CD8-positive, alpha-beta memory T cell (primary cell): ENCODE measurements at regions of chr11 and their contacts with region 1.

Region 1: GRCh38 chr11:447923-448731 is 2.0 kb upstream of the PTDSS2 start:
- DNase-seq: peak; percentile 90 to 96 (median 93)
- H3K4me3 ChIP-seq: peak overlapping the region; percentile 76
- H3K4me3 Mint-ChIP-seq: peak overlapping the region; percentile 88 to 97 (median 90)
- H3K27ac ChIP-seq: peak overlapping the region; percentile 79
- H3K27ac Mint-ChIP-seq: peak overlapping the region; percentile 94 to 98 (median 98)
- H3K4me1 ChIP-seq: peaks cover 22% of the 10 kb centered on the region
- H3K4me1 Mint-ChIP-seq: peaks cover 15 to 30% (median 25%) of the 10 kb centered on the region in 3 donors
- H3K27me3 ChIP-seq: no peaks in the 10 kb centered on the region
- H3K27me3 Mint-ChIP-seq: peaks cover 0 to 2% of the 10 kb centered on the region in 2 donors

Region 2: DNA sequence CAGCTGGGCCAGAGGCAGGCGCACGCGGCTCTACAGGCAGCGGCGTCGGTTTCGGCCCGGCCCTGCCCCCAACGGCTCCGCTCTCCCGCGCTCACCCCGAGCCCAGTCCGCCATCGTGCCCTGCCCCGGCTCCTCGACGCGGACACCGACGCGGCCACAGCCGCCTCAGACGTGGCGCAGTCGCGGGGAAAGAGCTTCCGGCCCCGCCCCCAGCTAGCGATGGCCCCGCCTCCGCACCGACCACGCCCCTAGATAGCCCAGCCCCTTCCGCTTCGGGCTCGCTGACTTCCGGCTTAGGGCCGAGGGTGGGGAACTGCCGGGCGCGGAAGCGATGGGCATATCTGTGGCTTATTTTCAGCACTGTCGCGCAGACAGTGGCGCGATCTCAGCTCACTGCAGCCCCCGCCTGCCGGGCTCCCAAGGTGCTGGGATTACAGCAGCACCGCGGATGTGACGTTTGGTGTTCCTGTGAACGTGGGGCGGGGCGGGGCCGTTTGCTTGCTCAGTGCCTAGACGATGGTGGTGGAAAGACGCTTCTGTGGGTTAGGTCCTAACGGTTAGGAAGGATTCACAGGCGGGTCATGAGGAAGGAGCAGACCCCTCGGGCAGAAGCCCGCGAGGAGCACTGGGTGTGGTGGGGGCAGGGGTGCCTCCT is 240.8 kb before region 1 on chr11 and contains the starts of genes BET1L and RIC8A:
- CTCF ChIA-PET with region 1: interaction called, 10 read pairs
- POLR2A ChIA-PET with region 1: interaction called, 26 read pairs
- DNase-seq: peak; percentile 96 to 99 (median 97)
- H3K4me3 ChIP-seq: peak within 1 kb of the TSS; percentile 83
- H3K4me3 Mint-ChIP-seq: peak within 1 kb of the TSS; percentile 95 to 100 (median 98)
- H3K27ac ChIP-seq: peak within 1 kb of the TSS; percentile 93
- H3K27ac Mint-ChIP-seq: peak within 1 kb of the TSS; percentile 99 to 100 (median 100)
- H3K4me1 ChIP-seq: peaks cover 58% of the 10 kb centered on the region
- H3K4me1 Mint-ChIP-seq: peaks cover 48 to 76% (median 55%) of the 10 kb centered on the region in 3 donors
- H3K27me3 ChIP-seq: no peaks in the 10 kb centered on the region
- H3K27me3 Mint-ChIP-seq: peaks cover 0 to 8% of the 10 kb centered on the region in 2 donors
- total RNA-seq, gene BET1L: 36.1 to 38.5 TPM
- total RNA-seq, gene RIC8A: 137 to 139 TPM

Region 3: DNA sequence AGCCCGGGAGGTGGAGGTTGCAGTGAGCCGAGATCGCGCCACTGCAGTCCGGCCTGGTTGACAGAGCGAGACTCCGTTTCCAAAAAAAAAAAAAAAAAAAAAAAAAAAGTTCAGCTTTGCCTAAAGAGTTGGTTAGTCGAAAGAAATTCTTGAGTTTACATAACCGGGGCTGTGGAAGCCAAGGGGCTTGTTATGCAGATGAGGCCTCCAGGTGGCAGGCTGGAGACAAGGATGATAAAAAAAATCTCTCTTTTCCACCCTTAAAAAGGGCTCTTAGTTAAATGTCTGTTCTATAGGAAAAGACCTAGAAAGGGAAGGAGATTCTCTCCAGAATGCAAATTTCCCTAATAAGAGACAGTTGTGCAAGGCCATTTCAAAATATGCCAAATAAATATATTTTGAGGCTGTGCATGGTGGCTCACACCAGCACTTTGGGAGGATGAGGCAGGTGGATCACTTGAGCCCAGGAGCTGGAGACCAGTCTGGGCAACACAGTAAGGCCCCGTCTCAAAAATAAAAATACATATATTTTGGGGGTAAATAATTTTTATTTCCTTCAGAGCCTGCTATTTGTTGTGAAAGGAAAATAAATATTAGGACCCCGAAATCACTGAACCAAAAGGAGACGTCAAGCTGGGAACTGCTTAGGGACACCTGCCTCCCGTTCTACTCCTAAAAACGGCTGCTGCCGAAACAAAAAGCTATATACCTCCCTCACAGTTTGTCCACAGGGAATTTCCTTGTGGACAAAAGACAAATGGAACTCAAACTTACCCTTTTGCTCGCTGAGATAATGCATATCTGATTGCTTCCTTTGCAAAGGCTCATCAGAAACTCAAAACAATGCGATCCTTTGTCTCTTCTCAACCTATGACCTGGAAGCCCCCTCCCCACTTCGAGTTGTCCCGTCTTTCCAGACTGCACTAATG is 142.9 kb before region 1 on chr11:
- CTCF ChIA-PET with region 1: interaction called, 17 read pairs
- POLR2A ChIA-PET with region 1: no interaction called
- DNase-seq: peak in 3 of 5 donors; percentile 60 to 80 (median 64)
- H3K4me3 ChIP-seq: no peak overlapping the region
- H3K4me3 Mint-ChIP-seq: peak overlapping the region in 4 of 7 donors; percentile 1 to 78 (median 53)
- H3K27ac ChIP-seq: no peak overlapping the region
- H3K27ac Mint-ChIP-seq: peak overlapping the region in 7 of 8 donors; percentile 18 to 92 (median 66)
- H3K4me1 ChIP-seq: peaks cover 40% of the 10 kb centered on the region
- H3K4me1 Mint-ChIP-seq: peaks cover 41 to 58% (median 49%) of the 10 kb centered on the region in 3 donors
- H3K27me3 ChIP-seq: no peaks in the 10 kb centered on the region
- H3K27me3 Mint-ChIP-seq: peaks cover 0 to 5% of the 10 kb centered on the region in 2 donors

Region 4: GRCh38 chr11:379205-380094 is 68.7 kb before region 1 on chr11:
- CTCF ChIA-PET with region 1: no interaction called
- POLR2A ChIA-PET with region 1: no interaction called
- DNase-seq: no peak
- H3K4me3 ChIP-seq: no peak overlapping the region
- H3K4me3 Mint-ChIP-seq: no peak overlapping the region
- H3K27ac ChIP-seq: no peak overlapping the region
- H3K27ac Mint-ChIP-seq: no peak overlapping the region
- H3K4me1 ChIP-seq: no peaks in the 10 kb centered on the region
- H3K4me1 Mint-ChIP-seq: peaks cover 0 to 5% (median 4%) of the 10 kb centered on the region in 3 donors
- H3K27me3 ChIP-seq: no peaks in the 10 kb centered on the region
- H3K27me3 Mint-ChIP-seq: peaks cover 9 to 13% of the 10 kb centered on the region in 2 donors

Region 5: GRCh38 chr11:396948-397548 is 51.1 kb before region 1 on chr11:
- CTCF ChIA-PET with region 1: interaction called, 17 read pairs
- POLR2A ChIA-PET with region 1: no interaction called
- DNase-seq: peak in 4 of 5 donors; percentile 36 to 72 (median 42)
- H3K4me3 ChIP-seq: no peak overlapping the region
- H3K4me3 Mint-ChIP-seq: peak overlapping the region in 5 of 7 donors; percentile 1 to 53 (median 47)
- H3K27ac ChIP-seq: no peak overlapping the region
- H3K27ac Mint-ChIP-seq: no peak overlapping the region
- H3K4me1 ChIP-seq: peaks cover 4% of the 10 kb centered on the region
- H3K4me1 Mint-ChIP-seq: peaks cover 0 to 11% (median 0%) of the 10 kb centered on the region in 3 donors
- H3K27me3 ChIP-seq: no peaks in the 10 kb centered on the region
- H3K27me3 Mint-ChIP-seq: peaks cover 0 to 2% of the 10 kb centered on the region in 2 donors

Region 6: GRCh38 chr11:416757-417621 is 31.1 kb before region 1 on chr11:
- CTCF ChIA-PET with region 1: interaction called, 158 read pairs
- POLR2A ChIA-PET with region 1: interaction called, 71 read pairs
- DNase-seq: peak; percentile 32 to 63 (median 46)
- H3K4me3 ChIP-seq: peak overlapping the region; percentile 83
- H3K4me3 Mint-ChIP-seq: peak overlapping the region; percentile 74 to 100 (median 94)
- H3K27ac ChIP-seq: peak overlapping the region; percentile 24
- H3K27ac Mint-ChIP-seq: peak overlapping the region in 3 of 8 donors; percentile 69 to 97 (median 97)
- H3K4me1 ChIP-seq: peaks cover 19% of the 10 kb centered on the region
- H3K4me1 Mint-ChIP-seq: peaks cover 14 to 36% (median 19%) of the 10 kb centered on the region in 3 donors
- H3K27me3 ChIP-seq: no peaks in the 10 kb centered on the region
- H3K27me3 Mint-ChIP-seq: no peaks in the 10 kb centered on the region

Region 7: DNA sequence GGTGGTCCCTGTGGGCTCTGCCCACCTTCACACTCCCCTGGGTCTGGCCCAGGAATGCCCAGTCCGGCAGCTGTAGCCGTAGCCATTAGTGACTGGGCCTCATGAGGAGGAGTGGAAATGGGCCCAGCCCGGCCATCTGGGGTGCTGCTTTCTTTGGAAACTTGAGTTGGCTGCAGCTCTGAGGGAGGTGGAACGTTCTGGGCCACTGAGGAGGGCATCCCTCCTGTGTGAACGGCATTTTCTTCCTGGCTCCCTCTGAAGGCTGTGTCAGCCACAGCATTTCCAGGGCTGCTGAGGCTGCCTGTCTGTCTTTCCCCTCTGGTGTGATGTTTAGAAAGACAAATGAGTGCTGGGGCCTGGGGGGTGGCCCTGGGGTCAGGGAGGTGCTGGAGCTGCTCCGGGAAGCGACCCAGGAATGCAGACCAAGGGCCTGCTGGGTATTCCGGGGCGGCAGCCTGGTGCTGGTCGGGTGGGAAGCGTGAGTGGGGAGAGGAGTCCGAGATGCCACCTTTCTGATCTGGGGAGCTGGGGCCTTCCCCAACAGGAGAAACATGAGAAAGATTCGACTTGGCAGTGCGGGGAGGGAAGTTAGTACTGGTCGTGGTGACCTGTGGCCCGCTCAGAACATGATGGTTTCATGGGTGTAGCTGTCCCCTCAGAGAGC is 29.1 kb after region 1 on chr11:
- CTCF ChIA-PET with region 1: no interaction called
- POLR2A ChIA-PET with region 1: no interaction called
- DNase-seq: no peak
- H3K4me3 ChIP-seq: no peak overlapping the region
- H3K4me3 Mint-ChIP-seq: no peak overlapping the region
- H3K27ac ChIP-seq: no peak overlapping the region
- H3K27ac Mint-ChIP-seq: peak overlapping the region in 1 of 8 donors; percentile 9
- H3K4me1 ChIP-seq: no peaks in the 10 kb centered on the region
- H3K4me1 Mint-ChIP-seq: no peaks in the 10 kb centered on the region
- H3K27me3 ChIP-seq: no peaks in the 10 kb centered on the region
- H3K27me3 Mint-ChIP-seq: no peaks in the 10 kb centered on the region

Region 8: DNA sequence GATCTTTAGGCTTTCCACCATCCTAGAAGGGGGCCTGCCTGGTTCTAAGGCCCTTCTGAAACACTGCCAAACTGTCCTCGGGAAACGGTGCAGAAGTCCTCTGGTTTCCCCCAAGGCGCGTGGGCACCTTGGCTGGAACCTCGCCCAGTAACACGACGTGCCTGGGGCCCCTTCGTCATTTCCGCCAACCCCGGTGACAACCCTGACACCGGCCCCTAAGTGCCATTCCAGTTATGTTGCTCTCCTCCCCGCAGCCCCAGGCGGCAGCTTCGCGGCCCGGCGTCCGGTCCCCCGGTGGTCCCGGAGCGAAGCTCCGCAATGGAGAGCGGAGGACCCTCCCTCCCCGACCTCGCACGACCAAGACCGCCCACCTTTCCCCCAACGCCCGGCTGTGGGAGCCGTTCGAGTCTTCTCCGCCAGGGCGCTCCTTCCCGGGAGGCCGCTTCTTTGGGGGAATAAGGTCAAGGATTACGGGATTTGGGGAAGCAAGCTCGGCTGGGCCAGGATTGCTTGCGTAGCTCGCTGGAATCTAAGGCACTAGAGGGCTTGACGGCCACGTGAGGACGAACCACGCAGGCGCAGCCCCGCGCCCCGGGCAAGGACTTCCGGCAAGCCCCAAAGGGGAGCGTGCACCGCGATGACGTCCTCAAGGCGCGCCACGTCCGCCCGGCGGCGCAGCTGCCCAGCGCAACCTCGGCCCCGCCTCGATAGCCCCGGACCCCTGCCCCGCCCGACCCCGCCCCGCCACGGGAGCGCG is 58.3 kb after region 1 on chr11:
- CTCF ChIA-PET with region 1: interaction called, 6 read pairs
- POLR2A ChIA-PET with region 1: interaction called, 15 read pairs
- DNase-seq: peak; percentile 96 to 98 (median 96)
- H3K4me3 ChIP-seq: peak overlapping the region; percentile 95
- H3K4me3 Mint-ChIP-seq: peak overlapping the region; percentile 89 to 100 (median 98)
- H3K27ac ChIP-seq: peak overlapping the region; percentile 100
- H3K27ac Mint-ChIP-seq: peak overlapping the region; percentile 97 to 100 (median 100)
- H3K4me1 ChIP-seq: peaks cover 31% of the 10 kb centered on the region
- H3K4me1 Mint-ChIP-seq: peaks cover 11 to 38% (median 21%) of the 10 kb centered on the region in 3 donors
- H3K27me3 ChIP-seq: no peaks in the 10 kb centered on the region
- H3K27me3 Mint-ChIP-seq: peaks cover 0 to 4% of the 10 kb centered on the region in 2 donors

Region 9: DNA sequence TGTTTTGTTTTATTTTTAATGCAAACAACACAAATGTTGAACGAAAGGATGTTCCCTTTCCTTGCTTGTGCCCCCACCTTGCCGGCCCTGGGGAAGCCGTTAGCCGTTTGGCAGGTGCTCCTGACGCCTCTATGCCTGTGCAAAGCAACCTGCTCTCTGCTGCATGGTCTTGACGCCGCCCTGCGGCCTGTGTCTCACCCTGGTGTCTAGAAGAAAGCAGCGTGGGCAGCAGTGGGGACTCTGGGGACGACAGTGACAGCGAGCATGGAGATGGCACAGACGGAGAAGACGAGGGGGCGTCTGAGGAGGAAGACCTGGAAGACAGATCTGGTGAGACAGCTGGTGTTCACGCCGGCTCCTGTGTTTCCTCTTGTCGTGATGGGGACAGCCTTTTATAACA is 133.6 kb after region 1 on chr11:
- CTCF ChIA-PET with region 1: no interaction called
- POLR2A ChIA-PET with region 1: no interaction called
- DNase-seq: no peak
- H3K4me3 ChIP-seq: no peak overlapping the region
- H3K4me3 Mint-ChIP-seq: peak overlapping the region in 1 of 7 donors; percentile 13
- H3K27ac ChIP-seq: no peak overlapping the region
- H3K27ac Mint-ChIP-seq: peak overlapping the region in 1 of 8 donors; percentile 60
- H3K4me1 ChIP-seq: peaks cover 35% of the 10 kb centered on the region
- H3K4me1 Mint-ChIP-seq: peaks cover 38 to 60% (median 45%) of the 10 kb centered on the region in 3 donors
- H3K27me3 ChIP-seq: no peaks in the 10 kb centered on the region
- H3K27me3 Mint-ChIP-seq: peaks cover 0 to 1% of the 10 kb centered on the region in 2 donors